AG04449 (cell line): ENCODE measurements at regions of chr11 and their contacts with region 1.

Region 1: GRCh38 chr11:61477727-61478148 is 30.8 kb upstream of the LRRC10B start:
- DNase-seq: no peak
- H3K4me3 ChIP-seq: no peak overlapping the region
- CTCF ChIP-seq: peak; percentile 89

Region 2: GRCh38 chr11:61347916-61348461 is 129.7 kb before region 1 on chr11:
- CTCF ChIA-PET with region 1: no interaction called
- POLR2A ChIA-PET with region 1: no interaction called
- DNase-seq: no peak
- H3K4me3 ChIP-seq: no peak overlapping the region
- CTCF ChIP-seq: no peak

Region 3: GRCh38 chr11:61439615-61440014 is 38.1 kb before region 1 on chr11:
- CTCF ChIA-PET with region 1: interaction called, 10 read pairs
- POLR2A ChIA-PET with region 1: no interaction called
- DNase-seq: no peak
- H3K4me3 ChIP-seq: no peak overlapping the region
- CTCF ChIP-seq: no peak

Region 4: DNA sequence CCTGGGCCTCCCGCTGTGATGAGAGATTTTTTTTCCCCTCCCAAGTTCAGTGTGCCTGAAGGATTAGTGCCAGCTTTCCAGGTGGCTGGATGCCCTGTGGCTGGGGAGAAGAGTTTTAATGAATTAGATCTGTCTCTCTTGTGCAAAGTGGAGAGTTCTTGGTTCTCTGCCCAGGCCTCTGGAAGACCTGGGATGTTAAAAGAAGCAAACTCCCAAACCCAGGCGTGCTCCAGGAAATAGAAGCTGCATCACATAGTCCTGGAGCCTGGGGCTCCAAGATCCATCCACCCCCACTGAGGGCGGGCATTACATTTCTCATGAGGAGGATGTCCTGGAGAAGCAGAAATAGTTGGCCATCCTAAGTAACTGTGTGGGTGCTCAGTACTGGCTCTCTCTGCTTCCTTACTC is 17.3 kb before region 1 on chr11:
- CTCF ChIA-PET with region 1: interaction called, 62 read pairs
- POLR2A ChIA-PET with region 1: no interaction called
- DNase-seq: no peak
- H3K4me3 ChIP-seq: no peak overlapping the region
- CTCF ChIP-seq: no peak

Region 5: GRCh38 chr11:61503212-61503770 is 25.6 kb after region 1 on chr11:
- CTCF ChIA-PET with region 1: interaction called, 107 read pairs
- POLR2A ChIA-PET with region 1: no interaction called
- DNase-seq: no peak
- H3K4me3 ChIP-seq: no peak overlapping the region
- CTCF ChIP-seq: no peak

Region 6: GRCh38 chr11:61522884-61523283 is 45.1 kb after region 1 on chr11:
- CTCF ChIA-PET with region 1: interaction called, 165 read pairs
- POLR2A ChIA-PET with region 1: no interaction called
- DNase-seq: no peak
- H3K4me3 ChIP-seq: no peak overlapping the region
- CTCF ChIP-seq: no peak

Region 7: DNA sequence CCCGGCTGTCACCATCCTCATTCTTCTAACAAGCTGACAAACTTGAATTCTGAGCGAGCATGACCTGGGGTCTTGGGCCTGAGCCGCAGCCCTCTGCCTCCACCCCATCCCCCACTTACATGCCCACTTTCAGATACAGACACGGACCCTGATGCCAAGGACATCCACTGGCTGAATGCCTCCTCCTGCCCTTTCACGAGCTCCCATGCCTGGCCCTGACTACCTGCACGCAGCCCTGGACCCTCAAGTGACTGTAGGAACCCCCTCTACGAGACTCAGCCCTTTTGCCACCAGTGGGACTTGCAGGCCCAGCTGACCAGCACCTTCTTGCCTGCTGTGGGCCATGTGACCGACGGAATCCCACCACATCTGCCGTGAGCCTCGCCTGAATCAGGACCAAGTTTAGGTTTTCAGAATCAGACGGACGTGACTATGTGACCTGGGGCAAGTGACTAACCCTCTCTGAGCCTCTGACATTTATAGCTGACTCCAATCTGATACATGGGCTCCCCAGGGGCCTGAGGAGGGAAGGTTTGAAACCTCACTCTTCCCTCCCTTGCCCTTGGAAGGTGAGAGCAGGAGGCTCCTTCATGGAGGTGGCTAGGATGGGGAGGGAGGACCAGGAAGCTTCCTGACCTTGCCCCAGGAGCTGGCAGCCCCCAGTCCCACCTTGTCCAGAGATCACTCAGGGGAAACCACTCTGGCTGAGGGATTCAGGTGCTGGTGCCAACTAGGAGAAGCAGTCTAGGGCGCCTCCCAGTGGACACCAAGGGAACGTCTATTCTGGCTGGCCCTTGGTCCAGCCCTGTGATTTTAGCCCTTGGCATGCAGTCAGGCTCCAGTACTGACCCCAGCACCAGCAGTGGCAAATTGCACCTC is 150.1 kb after region 1 on chr11:
- CTCF ChIA-PET with region 1: interaction called, 220 read pairs
- POLR2A ChIA-PET with region 1: interaction called, 3 read pairs
- DNase-seq: no peak
- H3K4me3 ChIP-seq: no peak overlapping the region
- CTCF ChIP-seq: peak; percentile 84

Region 8: DNA sequence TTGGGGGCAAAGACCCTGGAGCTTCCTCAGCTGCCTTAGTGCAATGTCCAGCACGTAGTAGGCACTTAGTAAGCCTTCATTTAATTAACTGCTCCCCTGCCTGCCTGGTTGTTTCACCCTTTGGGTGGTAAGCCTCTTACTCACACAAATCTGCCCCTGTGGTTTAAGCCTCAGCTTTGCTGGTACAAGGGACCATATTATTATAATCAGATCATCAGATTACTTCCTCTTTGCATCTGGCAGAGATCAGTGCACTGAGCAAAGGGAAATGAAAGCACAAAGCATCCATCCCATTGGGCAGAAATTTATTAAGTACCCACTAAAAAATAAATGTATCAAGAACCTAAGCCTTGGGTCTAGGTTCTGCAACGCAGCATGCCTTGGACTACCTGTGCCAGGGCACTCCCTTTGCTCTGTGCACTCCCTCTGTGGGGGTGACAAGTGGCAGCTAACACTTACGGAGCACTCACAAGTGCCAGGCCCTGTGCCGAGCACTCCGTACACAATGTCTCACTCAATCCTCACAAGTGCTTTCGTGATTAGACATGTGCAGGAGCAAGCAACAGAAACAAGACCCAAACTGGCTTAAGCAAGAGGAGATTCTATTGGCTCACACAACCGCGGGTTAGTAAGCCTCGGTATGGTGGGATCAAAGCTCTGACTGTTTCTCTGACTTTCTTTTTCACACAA is 167.6 kb after region 1 on chr11:
- CTCF ChIA-PET with region 1: interaction called, 220 read pairs
- POLR2A ChIA-PET with region 1: no interaction called
- DNase-seq: no peak
- H3K4me3 ChIP-seq: no peak overlapping the region
- CTCF ChIP-seq: no peak